GM12878 (cell line): ENCODE measurements at regions of chr16 and their contacts with region 1.

Region 1: DNA sequence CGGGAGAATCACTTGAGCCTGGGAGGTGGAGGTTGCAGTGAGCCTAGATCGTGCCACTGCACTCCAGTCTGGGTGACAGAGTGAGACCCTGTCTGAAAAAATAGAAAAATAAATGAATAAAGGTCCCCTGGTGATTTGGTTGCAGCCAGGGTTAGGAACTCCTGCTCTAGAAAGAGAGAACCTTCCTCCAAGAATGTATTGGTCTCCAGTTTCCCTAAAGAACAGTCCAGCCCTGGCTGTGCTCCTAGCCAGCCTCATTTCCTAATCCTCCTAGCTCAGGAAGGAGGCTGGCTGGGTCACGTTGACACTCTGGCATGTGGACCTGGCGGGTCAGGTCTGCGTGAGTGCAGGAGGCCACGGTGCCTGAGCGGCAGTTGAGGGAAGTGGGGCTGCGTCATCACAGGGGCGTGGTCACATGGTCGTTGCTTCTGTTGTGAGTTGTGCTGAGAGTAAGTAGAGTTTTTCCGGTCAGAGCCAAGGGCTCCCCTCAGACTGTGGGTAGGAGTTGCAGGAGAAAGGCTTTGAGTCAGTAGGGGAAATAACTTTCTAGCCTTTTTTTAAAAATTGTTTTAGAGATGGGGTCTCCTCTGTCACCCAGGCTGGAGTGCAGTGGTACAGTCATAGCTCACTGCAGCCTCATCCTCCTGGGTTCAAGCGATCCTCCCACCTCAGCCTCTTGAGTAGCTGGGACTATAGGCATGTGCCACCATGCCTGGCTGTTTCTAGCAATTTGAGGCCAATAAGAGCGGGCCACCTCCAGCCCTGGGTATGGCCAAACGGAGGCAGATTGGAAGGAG is 193.9 kb upstream of the CIBAR2 start:
- DNase-seq: peak; percentile 30
- ATAC-seq: peak; percentile 69
- H3K4me3 ChIP-seq: no peak overlapping the region
- H3K27ac ChIP-seq: no peak overlapping the region
- H3K4me1 ChIP-seq: peaks cover 22% of the 10 kb centered on the region
- H3K27me3 ChIP-seq: peaks cover 0 to 2% of the 10 kb centered on the region in 2 experiments; a peak in 1 of 4 replicates
- CTCF ChIP-seq: no peak
- EP300 ChIP-seq: no peak
- POLR2A ChIP-seq: no peak; the same call in 1 of the 2 replicates
- RAD21 ChIP-seq: no peak

Region 2: DNA sequence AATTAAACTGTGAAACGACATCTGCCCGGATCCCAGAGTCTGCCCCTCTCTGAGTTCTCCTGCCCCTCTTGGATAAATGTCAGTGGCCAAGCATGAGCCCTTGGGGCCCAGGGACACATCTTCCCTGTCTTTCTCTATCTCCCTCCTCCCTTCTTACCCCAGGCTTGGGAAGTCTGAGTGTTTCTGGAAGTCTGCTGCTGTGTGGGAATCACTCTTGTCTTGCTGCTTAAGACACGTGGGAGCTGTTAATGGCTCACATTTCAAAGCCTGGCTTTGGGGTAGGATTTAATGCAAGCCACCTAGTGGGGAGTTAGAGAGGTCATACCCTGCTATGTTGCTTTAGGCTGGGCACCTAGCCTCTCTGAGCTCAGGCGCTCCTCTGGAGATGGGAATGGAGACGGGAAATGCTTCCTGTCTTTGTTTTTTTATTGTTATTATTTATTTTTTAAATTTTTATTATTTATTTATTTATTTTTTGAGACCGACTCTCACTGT is 24.5 kb after region 1 on chr16:
- CTCF ChIA-PET with region 1: interaction called, 5 read pairs
- POLR2A ChIA-PET with region 1: no interaction called
- RAD21 ChIA-PET with region 1: no interaction called
- SMC1A ChIA-PET with region 1: interaction called, 5 read pairs
- in situ Hi-C with region 1: no loop called
- intact Hi-C with region 1: loop called (anchors 2 kb)
- DNase-seq: no peak
- ATAC-seq: peak; percentile 87
- H3K4me3 ChIP-seq: no peak overlapping the region
- H3K27ac ChIP-seq: no peak overlapping the region
- H3K4me1 ChIP-seq: no peaks in the 10 kb centered on the region
- H3K27me3 ChIP-seq: peaks cover 0 to 15% of the 10 kb centered on the region in 2 experiments; a peak in 3 of 4 replicates
- CTCF ChIP-seq: peak; percentile 37 to 48 (median 38)
- EP300 ChIP-seq: no peak
- POLR2A ChIP-seq: no peak
- RAD21 ChIP-seq: peak; percentile 48

Region 3: GRCh38 chr16:85420501-85421337 is 114.5 kb after region 1 on chr16:
- CTCF ChIA-PET with region 1: no interaction called
- POLR2A ChIA-PET with region 1: no interaction called
- RAD21 ChIA-PET with region 1: no interaction called
- SMC1A ChIA-PET with region 1: no interaction called
- in situ Hi-C with region 1: no loop called
- intact Hi-C with region 1: loop called (anchors 10 kb)
- DNase-seq: no peak
- ATAC-seq: peak; percentile 89
- H3K4me3 ChIP-seq: no peak overlapping the region
- H3K27ac ChIP-seq: no peak overlapping the region
- H3K4me1 ChIP-seq: no peaks in the 10 kb centered on the region
- H3K27me3 ChIP-seq: no peaks in the 10 kb centered on the region; a peak in 1 of 4 replicates
- CTCF ChIP-seq: peak; percentile 96 to 100 (median 98)
- EP300 ChIP-seq: no peak
- POLR2A ChIP-seq: no peak
- RAD21 ChIP-seq: peak; percentile 46; the same call in 1 of the 2 replicates